ENCODE measurements at regions of chr19 and their contacts with region 1.

Region 1: DNA sequence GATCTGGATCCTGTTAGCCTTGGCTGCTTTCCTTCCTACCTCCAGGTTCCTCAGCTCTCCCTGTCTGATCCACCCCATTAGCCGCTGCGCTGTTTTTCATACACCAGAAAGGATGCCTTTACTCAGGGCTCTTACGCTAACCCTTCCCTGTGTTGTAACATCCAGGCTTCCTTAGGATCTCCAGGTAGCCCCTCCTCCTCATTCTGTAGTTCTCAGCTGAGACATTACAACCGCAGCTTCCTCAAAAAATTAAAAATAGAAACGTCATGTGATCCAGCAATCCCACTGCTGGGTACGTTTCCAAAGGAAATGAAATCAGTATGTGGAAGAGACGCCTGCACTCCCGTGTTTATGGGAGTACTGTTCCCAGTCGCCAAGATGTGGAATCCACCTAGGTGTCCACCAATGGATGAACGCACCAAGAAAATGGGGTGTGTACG is 18.4 kb upstream of the MYADM start:
- DNase-seq: no peak
- H3K4me3 Mint-ChIP-seq: no peak overlapping the region
- H3K27ac Mint-ChIP-seq: no peak overlapping the region
- H3K4me1 Mint-ChIP-seq: peaks cover 21% of the 10 kb centered on the region
- H3K27me3 Mint-ChIP-seq: peaks cover 21% of the 10 kb centered on the region

Region 2: DNA sequence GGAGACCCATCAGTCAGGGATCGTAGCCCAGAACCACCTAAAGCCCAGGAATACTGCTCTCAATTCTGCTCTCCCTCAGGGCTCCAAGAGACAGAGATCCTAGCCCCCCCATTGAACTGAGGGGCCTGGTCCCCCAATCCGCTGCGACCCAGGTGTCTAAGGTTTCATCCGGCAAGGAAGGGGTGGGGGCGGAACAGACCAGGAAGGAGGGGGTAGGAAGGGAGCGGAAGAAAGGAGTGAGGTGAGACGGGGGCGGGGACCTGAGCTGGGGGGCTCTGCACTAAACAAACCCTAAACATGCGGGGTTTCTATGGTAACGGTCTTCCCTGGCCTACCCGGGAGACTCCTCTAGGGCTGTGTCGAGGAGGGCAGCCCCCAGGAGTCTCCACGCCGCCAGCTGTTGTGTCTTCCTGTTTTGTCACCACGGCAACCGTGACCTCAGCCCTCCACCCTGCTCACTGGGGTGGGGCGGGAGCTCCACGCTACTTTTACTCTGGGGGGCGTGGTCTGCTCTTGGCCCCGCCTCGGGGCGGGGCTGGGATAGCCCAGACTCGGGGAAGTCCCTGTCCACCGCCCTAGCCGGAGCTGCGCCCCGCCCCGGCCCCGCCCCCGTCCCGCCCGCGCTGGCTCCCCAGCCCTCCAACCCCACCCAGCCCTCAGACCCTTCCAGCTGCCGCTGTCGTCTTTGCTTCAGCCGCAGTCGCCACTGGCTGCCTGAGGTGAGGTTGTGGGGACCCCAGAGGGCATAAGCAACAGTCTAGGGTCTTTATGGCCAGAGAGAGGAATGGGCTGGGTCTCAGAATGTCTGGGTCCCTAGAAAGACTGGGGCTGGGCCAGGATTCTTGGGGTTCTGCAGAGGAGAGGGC is 18.2 kb after region 1 on chr19 and contains the start of gene MYADM:
- CTCF ChIA-PET with region 1: interaction called, 31 read pairs
- POLR2A ChIA-PET with region 1: interaction called, 49 read pairs
- DNase-seq: peak; percentile 100
- H3K4me3 Mint-ChIP-seq: peak within 1 kb of the TSS; percentile 97
- H3K27ac Mint-ChIP-seq: peak within 1 kb of the TSS; percentile 90
- H3K4me1 Mint-ChIP-seq: peaks cover 43% of the 10 kb centered on the region
- H3K27me3 Mint-ChIP-seq: peaks cover 2% of the 10 kb centered on the region
- total RNA-seq, gene MYADM: 109 TPM

Region 3: GRCh38 chr19:54023191-54023590 is 173.9 kb after region 1 on chr19:
- CTCF ChIA-PET with region 1: interaction called, 23 read pairs
- POLR2A ChIA-PET with region 1: interaction called, 3 read pairs
- DNase-seq: no peak
- H3K4me3 Mint-ChIP-seq: no peak overlapping the region
- H3K27ac Mint-ChIP-seq: no peak overlapping the region
- H3K4me1 Mint-ChIP-seq: peaks cover 35% of the 10 kb centered on the region
- H3K27me3 Mint-ChIP-seq: peaks cover 6% of the 10 kb centered on the region